ENCODE measurements at regions of chr17 and their contacts with region 1.

Region 1: DNA sequence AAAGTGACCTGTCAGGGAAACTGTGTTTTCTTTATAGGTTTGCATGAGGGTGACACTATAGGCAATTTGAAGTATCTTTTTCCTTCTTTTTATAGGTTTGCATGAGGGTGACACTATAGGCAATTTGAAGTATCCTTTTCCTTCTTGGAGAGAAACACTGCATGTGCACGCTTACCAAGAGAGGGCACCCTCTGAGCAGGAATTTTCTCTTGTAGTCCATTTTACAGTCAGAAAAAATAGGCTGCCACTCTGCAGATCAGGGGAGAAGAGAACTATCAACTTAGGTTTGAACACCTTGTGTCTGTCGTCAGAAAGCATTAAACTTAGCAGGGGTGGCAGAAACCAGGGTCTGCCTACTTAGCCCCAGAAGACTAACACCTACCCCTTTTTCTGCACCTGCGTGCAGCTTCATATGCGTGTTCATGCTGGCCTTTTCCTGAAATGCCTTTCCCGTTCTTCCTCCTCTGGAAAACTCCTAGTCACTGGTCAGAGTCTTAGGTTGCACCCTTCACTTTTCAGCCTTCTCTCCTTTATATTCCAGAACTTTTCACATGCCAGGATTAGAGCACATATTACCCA is 16.4 kb upstream of the SMIM36 start:
- DNase-seq: peak; percentile 79
- H3K4me3 ChIP-seq: no peak overlapping the region
- H3K27ac ChIP-seq: no peak overlapping the region
- H3K4me1 ChIP-seq: peaks cover 9% of the 10 kb centered on the region
- H3K27me3 ChIP-seq: no peaks in the 10 kb centered on the region
- CTCF ChIP-seq: peak; percentile 89

Region 2: DNA sequence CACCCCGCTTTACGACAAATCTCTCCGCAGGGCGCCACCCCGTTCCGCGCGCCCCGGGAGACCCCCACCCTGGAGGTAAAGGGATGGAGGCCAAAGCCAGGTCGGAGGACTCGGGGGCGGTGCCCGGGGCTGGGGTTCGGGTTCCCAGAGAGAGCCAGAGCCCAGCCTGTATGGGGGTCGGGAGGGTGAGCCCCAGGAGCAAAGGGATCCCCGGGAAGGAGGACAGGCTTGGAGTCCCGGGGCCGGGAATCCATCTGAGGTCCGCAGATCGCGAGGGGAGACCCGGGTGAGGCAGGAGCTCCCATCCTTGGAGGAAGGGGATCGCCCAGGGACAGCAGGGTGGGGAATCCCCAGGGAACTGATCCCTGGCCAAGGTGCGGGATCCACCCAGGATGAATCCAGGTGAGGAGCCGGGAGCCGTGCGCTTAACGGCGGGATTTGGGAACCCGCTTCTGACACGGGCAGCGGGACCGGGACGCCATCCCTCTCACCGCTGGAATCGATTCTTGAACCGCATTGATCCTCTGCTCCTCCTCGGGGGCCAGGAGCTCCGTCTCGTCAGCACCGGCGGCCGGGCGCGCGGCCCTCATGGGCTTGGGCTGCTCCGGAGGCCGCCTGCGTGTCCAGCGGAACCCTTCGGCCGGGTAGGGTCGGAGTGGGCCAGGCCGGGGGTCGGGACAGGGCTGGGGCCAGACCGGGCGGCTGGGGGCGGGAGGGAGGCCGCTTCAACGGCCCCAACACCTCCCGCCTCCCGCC is 106.3 kb before region 1 on chr17 and contains the start of gene MMD:
- CTCF ChIA-PET with region 1: no interaction called
- POLR2A ChIA-PET with region 1: no interaction called
- intact Hi-C with region 1: no loop called
- DNase-seq: no peak
- H3K4me3 ChIP-seq: peak within 1 kb of the TSS; percentile 75
- H3K27ac ChIP-seq: peak within 1 kb of the TSS; percentile 79
- H3K4me1 ChIP-seq: peaks cover 13% of the 10 kb centered on the region
- H3K27me3 ChIP-seq: peaks cover 11% of the 10 kb centered on the region
- CTCF ChIP-seq: no peak
- total RNA-seq, gene MMD: 24.9 and 31.3 TPM in 2 replicates

Region 3: GRCh38 chr17:55601874-55602364 is 74.3 kb after region 1 on chr17:
- CTCF ChIA-PET with region 1: interaction called, 10 read pairs
- POLR2A ChIA-PET with region 1: no interaction called
- intact Hi-C with region 1: loop called (anchors 1 kb)
- DNase-seq: peak; percentile 68
- H3K4me3 ChIP-seq: no peak overlapping the region
- H3K27ac ChIP-seq: no peak overlapping the region
- H3K4me1 ChIP-seq: no peaks in the 10 kb centered on the region
- H3K27me3 ChIP-seq: peaks cover 37% of the 10 kb centered on the region
- CTCF ChIP-seq: peak; percentile 81

Region 4: GRCh38 chr17:55717898-55718735 is 190.5 kb after region 1 on chr17:
- CTCF ChIA-PET with region 1: interaction called, 10 read pairs
- POLR2A ChIA-PET with region 1: no interaction called
- intact Hi-C with region 1: loop called (anchors 1 kb)
- DNase-seq: peak; percentile 87
- H3K4me3 ChIP-seq: no peak overlapping the region
- H3K27ac ChIP-seq: no peak overlapping the region
- H3K4me1 ChIP-seq: peaks cover 25% of the 10 kb centered on the region
- H3K27me3 ChIP-seq: no peaks in the 10 kb centered on the region
- CTCF ChIP-seq: peak; percentile 89

Region 5: DNA sequence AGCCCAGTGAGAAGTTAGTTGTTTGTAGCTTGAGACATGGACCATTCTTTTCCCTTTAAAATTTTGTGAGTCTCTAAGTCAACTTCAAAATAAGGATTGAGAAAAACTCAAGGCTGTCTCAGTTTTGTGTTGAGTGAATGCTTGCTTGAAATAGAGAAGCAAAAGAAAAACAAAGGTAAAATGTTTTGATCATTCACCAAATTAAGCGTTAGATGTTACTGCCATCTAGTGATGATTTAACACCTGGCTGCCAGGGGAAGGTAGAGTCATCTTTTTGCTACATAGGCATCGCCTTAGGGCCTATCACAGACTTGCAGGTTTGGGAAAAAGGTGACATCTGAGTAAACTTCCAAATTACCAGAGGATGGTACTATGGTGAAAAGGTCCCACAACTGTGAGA is 297.6 kb after region 1 on chr17:
- CTCF ChIA-PET with region 1: no interaction called
- POLR2A ChIA-PET with region 1: no interaction called
- intact Hi-C with region 1: loop called (anchors 1 kb)
- DNase-seq: peak; percentile 24
- H3K4me3 ChIP-seq: no peak overlapping the region
- H3K27ac ChIP-seq: no peak overlapping the region
- H3K4me1 ChIP-seq: no peaks in the 10 kb centered on the region
- H3K27me3 ChIP-seq: peaks cover 64% of the 10 kb centered on the region
- CTCF ChIP-seq: peak; percentile 54

Region 6: DNA sequence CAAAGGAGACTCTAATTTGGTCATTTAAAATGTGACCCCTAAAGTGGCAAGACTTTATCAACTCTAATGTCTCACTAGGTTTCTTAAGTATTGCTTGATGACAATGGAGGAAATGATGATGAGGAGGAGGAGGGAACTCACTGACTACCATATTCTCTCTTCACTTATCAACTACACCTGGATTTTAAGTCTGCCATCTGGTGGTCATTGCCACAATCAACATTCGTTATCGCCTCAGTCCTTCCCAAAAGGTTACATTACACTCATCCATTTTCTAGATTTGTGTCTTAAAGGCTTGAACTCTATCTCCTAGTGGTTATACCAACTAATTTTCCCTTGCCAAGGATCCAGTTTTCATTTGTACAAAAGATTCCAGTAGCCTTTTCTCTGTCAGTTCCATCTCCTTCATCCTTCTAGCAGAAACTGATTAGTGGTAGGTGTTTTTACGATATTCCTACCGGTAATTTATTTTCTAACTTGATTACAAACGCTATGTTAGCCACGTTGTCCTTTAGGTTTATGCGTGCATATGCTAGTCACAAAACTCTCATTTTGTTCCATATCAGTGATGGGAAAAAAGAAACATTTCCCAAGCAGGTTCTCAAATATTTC is 951.3 kb after region 1 on chr17:
- CTCF ChIA-PET with region 1: no interaction called
- POLR2A ChIA-PET with region 1: no interaction called
- intact Hi-C with region 1: loop called (anchors 5 kb)
- DNase-seq: peak; percentile 45
- H3K4me3 ChIP-seq: no peak overlapping the region
- H3K27ac ChIP-seq: no peak overlapping the region
- H3K4me1 ChIP-seq: no peaks in the 10 kb centered on the region
- H3K27me3 ChIP-seq: peaks cover 24% of the 10 kb centered on the region
- CTCF ChIP-seq: peak; percentile 70

Measured in A673 (cell line).